ENCODE measurements at regions of chr6 and their contacts with region 1.

Region 1: DNA sequence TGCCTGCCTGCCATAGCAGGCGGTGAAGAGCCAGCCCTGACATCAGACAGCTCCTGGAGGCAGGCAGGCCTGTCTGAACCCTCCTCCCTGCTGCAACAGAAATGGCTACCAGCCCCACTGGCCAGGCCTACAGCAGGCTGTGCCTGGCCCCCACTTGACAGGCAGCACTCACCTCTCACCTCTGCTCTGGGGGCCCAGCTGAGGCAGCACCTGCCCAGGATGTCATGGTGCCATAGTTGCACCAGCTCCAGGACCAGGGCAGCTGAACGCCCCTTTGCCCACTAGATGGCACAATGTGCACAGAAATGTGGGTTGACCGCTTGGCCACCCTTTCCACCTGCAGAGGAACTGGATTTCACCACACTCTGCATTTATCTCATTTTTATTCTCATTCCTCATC is 30.6 kb downstream of the MRPL14 start:
- DNase-seq: peak; percentile 66
- H3K4me3 ChIP-seq: no peak overlapping the region
- H3K27ac ChIP-seq: no peak overlapping the region
- H3K4me1 ChIP-seq: no peaks in the 10 kb centered on the region
- H3K27me3 ChIP-seq: no peaks in the 10 kb centered on the region
- CTCF ChIP-seq: peak; percentile 77 to 83
- POLR2A ChIP-seq: no peak

Region 2: GRCh38 chr6:44058617-44059358 is 37.8 kb before region 1 on chr6:
- CTCF ChIA-PET with region 1: no interaction called
- POLR2A ChIA-PET with region 1: no interaction called
- dilution Hi-C with region 1: no loop called
- intact Hi-C with region 1: no loop called
- DNase-seq: peak; percentile 95
- H3K4me3 ChIP-seq: no peak overlapping the region
- H3K27ac ChIP-seq: peak overlapping the region; percentile 93
- H3K4me1 ChIP-seq: peaks cover 39% of the 10 kb centered on the region
- H3K27me3 ChIP-seq: no peaks in the 10 kb centered on the region
- CTCF ChIP-seq: no peak
- POLR2A ChIP-seq: no peak

Region 3: DNA sequence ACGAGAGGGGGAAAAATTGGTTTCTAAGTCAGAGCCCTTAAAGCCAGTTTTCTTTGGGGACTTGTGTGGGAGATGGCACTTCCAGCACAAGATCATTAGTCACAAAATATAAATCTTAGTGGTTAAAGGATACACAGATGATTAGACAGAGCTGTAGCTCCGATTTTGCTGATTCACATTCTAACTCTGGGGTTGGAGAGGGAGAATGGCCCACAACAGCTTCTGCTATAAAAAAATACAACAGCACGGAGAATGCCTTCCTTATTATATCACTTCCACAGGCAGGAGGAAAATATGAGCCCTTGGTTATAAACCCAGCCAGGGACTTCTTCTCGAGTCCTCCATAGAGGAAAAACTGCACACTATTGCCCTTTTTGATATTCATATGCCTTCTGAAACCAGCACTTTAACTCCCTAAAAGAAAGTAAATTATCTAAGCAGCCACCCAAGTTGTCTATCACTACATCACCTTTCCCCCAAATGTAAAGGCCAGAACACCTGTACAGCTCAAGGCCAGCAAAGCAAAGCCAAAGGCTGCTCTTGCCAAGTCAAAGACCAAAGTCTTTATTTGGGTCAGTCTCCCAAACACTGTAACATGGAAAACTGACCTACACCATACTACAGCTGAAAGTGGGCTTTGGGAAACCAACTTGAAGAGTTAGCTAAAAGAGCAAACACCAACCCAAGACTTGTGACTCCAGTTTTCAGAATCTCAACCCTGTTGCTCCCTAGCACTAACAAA is 20.2 kb after region 1 on chr6:
- CTCF ChIA-PET with region 1: interaction called, 28 read pairs
- POLR2A ChIA-PET with region 1: no interaction called
- dilution Hi-C with region 1: no loop called
- intact Hi-C with region 1: no loop called
- DNase-seq: peak; percentile 81
- H3K4me3 ChIP-seq: no peak overlapping the region
- H3K27ac ChIP-seq: peak overlapping the region; percentile 73
- H3K4me1 ChIP-seq: peaks cover 33% of the 10 kb centered on the region
- H3K27me3 ChIP-seq: no peaks in the 10 kb centered on the region
- CTCF ChIP-seq: no peak
- POLR2A ChIP-seq: no peak

Region 4: DNA sequence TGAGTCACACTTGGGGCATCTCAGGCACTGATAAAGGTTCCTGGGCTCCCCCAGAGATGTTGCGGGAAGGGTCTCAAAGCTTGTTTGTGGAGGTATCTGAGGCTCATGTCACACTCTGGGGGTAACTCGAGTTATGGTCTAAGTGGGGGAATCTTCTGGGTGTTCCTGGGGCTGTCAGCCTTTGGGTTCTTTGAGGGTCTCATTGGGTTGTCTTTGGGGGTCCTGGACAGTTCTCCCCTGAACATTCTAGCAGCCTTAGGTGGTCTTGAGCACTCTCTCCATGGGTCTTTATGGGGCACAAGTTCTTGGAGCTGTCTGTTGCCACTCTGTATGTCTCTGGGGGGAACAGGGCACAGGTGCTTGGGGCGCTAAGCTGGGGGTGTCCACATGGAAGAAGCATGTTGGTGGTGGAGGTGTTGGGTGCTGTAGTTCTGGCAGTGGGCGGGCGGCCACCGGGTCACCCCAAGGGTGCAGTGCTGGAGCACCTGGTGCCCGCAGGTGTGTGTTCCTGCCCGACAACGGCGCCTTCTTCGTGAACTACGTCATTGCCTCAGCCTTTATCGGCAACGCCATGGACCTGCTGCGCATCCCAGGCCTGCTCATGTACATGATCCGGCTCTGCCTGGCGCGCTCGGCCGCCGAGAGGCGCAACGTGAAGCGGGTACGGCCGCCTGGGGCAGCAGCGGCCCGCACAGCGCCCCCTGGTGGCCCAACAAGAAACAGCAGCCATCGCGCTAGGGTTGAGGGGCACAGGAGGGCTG is 54.9 kb after region 1 on chr6:
- CTCF ChIA-PET with region 1: interaction called, 95 read pairs
- POLR2A ChIA-PET with region 1: no interaction called
- dilution Hi-C with region 1: no loop called
- intact Hi-C with region 1: loop called (anchors 1 kb)
- DNase-seq: peak; percentile 63
- H3K4me3 ChIP-seq: no peak overlapping the region
- H3K27ac ChIP-seq: no peak overlapping the region
- H3K4me1 ChIP-seq: no peaks in the 10 kb centered on the region
- H3K27me3 ChIP-seq: no peaks in the 10 kb centered on the region
- CTCF ChIP-seq: peak; percentile 99
- POLR2A ChIP-seq: no peak

Region 5: DNA sequence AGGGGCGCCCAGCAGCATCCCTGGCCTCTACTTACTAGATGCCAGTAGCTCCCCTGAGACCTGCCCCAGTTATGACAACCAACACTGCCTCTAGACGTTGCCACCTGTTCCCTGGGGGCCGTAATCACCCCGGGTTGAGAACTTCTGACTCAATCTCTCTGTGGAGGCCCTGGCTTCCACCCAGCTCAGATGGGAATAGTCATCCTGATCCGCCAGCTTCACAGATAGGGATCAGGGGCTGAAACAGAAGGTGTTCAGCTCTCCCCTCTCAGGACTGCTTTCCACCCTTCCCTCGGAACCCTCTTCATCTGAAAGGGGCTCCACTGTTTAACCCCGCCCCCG is 65.4 kb after region 1 on chr6:
- CTCF ChIA-PET with region 1: interaction called, 56 read pairs
- POLR2A ChIA-PET with region 1: no interaction called
- dilution Hi-C with region 1: no loop called
- intact Hi-C with region 1: no loop called
- DNase-seq: no peak
- H3K4me3 ChIP-seq: no peak overlapping the region
- H3K27ac ChIP-seq: no peak overlapping the region
- H3K4me1 ChIP-seq: no peaks in the 10 kb centered on the region
- H3K27me3 ChIP-seq: peaks cover 2 to 19% of the 10 kb centered on the region in 2 experiments
- CTCF ChIP-seq: no peak
- POLR2A ChIP-seq: no peak

Region 6: GRCh38 chr6:44237813-44238433 is 141.3 kb after region 1 on chr6:
- CTCF ChIA-PET with region 1: interaction called, 16 read pairs
- POLR2A ChIA-PET with region 1: no interaction called
- dilution Hi-C with region 1: loop called (anchors 10 kb)
- intact Hi-C with region 1: loop called (anchors 1 kb)
- DNase-seq: peak; percentile 67
- H3K4me3 ChIP-seq: peak overlapping the region in 1 of 3 experiments; percentile 35
- H3K27ac ChIP-seq: peak overlapping the region; percentile 70
- H3K4me1 ChIP-seq: peaks cover 41% of the 10 kb centered on the region
- H3K27me3 ChIP-seq: no peaks in the 10 kb centered on the region
- CTCF ChIP-seq: peak; percentile 99
- POLR2A ChIP-seq: peak; percentile 13

Region 7: GRCh38 chr6:44304282-44305199 is 207.9 kb after region 1 on chr6:
- CTCF ChIA-PET with region 1: interaction called, 12 read pairs
- POLR2A ChIA-PET with region 1: no interaction called
- dilution Hi-C with region 1: no loop called
- intact Hi-C with region 1: loop called (anchors 1 kb)
- DNase-seq: peak; percentile 41
- H3K4me3 ChIP-seq: no peak overlapping the region
- H3K27ac ChIP-seq: no peak overlapping the region
- H3K4me1 ChIP-seq: no peaks in the 10 kb centered on the region
- H3K27me3 ChIP-seq: no peaks in the 10 kb centered on the region
- CTCF ChIP-seq: peak; percentile 80 to 84
- POLR2A ChIP-seq: no peak